Sigmoid colon (tissue), 7 donors: ENCODE measurements at regions of chr1 and their contacts with region 1.

Region 1: DNA sequence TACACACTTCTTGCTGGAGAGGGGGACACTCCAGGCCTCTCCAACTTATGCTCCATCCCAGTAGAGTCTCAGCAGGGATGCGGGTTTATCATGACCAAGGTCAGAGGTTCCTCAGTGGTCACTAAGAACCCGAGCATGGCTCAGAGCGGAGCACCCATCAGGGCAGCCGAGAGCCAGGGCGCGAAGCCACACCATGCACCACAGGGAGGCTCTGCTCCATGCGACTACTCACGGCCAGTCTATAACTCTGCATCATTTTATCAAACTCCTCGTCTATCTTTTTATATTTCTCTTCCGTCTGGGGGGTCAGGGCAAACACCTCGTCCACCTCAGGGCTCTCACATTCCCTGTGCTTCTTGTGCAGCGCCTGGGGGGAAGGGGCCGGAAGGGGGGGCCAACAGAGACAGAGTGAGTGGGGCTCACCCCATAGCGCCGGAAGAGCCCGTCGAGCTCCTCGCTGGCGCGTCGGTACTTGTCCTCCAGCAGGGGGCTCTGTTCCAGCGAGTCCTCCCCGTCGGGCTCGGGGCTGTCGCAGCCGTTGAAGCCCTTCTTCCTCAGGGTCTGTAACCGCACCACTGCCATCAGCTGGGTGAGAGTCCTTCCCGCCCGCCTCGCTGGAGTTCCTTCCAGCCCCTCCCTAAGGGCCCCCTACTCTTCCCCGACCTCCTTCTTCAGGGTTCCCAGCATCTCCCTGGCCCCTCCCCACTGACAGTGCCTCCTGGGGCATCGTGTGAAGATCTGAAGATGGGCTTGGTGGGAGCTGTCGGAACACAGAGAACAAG is 20.0 kb downstream of the MEF2D start:
- DNase-seq: peak; percentile 88
- H3K4me3 ChIP-seq: no peak overlapping the region
- H3K27ac ChIP-seq: peak overlapping the region; percentile 89 to 98 (median 90)
- H3K4me1 ChIP-seq: peaks cover 0 to 97% (median 94%) of the 10 kb centered on the region in 4 donors
- H3K27me3 ChIP-seq: no peaks in the 10 kb centered on the region
- CTCF ChIP-seq: peak; percentile 28 to 74 (median 58)
- EP300 ChIP-seq: no peak
- POLR2A ChIP-seq: no peak

Region 2: GRCh38 chr1:156500797-156501499 is 20.3 kb after region 1 on chr1:
- intact Hi-C with region 1: loop called (anchors 2 kb)
- DNase-seq: peak; percentile 98
- H3K4me3 ChIP-seq: peak overlapping the region; percentile 89 to 100 (median 95)
- H3K27ac ChIP-seq: peak overlapping the region; percentile 98 to 100 (median 100)
- H3K4me1 ChIP-seq: peaks cover 0 to 74% (median 73%) of the 10 kb centered on the region in 4 donors
- H3K27me3 ChIP-seq: no peaks in the 10 kb centered on the region
- CTCF ChIP-seq: peak in 3 of 4 experiments; percentile 27 to 36 (median 34)
- EP300 ChIP-seq: peak in 3 of 4 donors; percentile 3 to 75 (median 57)
- POLR2A ChIP-seq: peak; percentile 89 to 91

Region 3: GRCh38 chr1:156510709-156511108 is 30.1 kb after region 1 on chr1:
- intact Hi-C with region 1: loop called (anchors 5 kb)
- DNase-seq: peak; percentile 99
- H3K4me3 ChIP-seq: no peak overlapping the region
- H3K27ac ChIP-seq: peak overlapping the region; percentile 98 to 100 (median 100)
- H3K4me1 ChIP-seq: peaks cover 0 to 73% (median 67%) of the 10 kb centered on the region in 4 donors
- H3K27me3 ChIP-seq: no peaks in the 10 kb centered on the region
- CTCF ChIP-seq: no peak
- EP300 ChIP-seq: peak; percentile 73 to 97 (median 92)
- POLR2A ChIP-seq: peak in 1 of 2 donors; percentile 48

Region 4: GRCh38 chr1:156601122-156601830 is 120.7 kb after region 1 on chr1 and contains the start of gene GPATCH4:
- intact Hi-C with region 1: loop called (anchors 2 kb)
- DNase-seq: peak; percentile 91
- H3K4me3 ChIP-seq: peak within 1 kb of the TSS; percentile 65 to 73 (median 65)
- H3K27ac ChIP-seq: peak within 1 kb of the TSS; percentile 79 to 84 (median 82)
- H3K4me1 ChIP-seq: peaks cover 0 to 20% (median 18%) of the 10 kb centered on the region in 4 donors
- H3K27me3 ChIP-seq: no peaks in the 10 kb centered on the region
- CTCF ChIP-seq: no peak
- EP300 ChIP-seq: peak in 2 of 4 donors; percentile 4 to 8
- POLR2A ChIP-seq: no peak
- total RNA-seq, gene GPATCH4: 12.2 to 22.9 (median 17.3) TPM